ENCODE measurements at regions of chr2 and their contacts with region 1.

Region 1: GRCh38 chr2:210002158-210003157 is at the start of gene RPE:
- DNase-seq: peak; percentile 98
- ATAC-seq: peak; percentile 100
- total RNA-seq, gene RPE: 29.3 to 30.0 TPM

Region 2: DNA sequence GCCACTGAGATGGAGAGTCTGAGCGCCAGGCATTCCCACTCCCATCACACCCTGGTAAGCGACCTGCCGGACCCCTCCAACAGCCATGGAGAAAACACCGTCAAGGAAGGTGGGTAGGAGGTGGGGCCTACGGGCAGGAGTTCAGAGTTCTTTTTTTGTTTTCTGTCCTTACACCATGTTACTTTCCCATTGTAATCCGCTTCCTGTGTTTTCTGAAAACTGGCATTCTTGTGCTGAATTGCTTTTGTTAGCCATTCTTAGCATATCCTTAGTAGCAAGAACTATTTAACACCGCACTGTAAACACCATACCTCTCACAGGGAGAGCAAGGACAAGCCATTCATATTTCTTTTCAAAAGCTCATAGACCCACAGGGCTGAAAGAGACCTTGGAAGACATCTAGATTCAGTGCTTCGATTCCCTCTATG is 184.6 kb before region 1 on chr2:
- intact Hi-C with region 1: no loop called
- DNase-seq: no peak
- ATAC-seq: no peak

Region 3: GRCh38 chr2:210086292-210086691 is 83.8 kb after region 1 on chr2:
- intact Hi-C with region 1: no loop called
- DNase-seq: no peak
- ATAC-seq: no peak

Region 4: GRCh38 chr2:210112871-210113270 is 110.4 kb after region 1 on chr2:
- intact Hi-C with region 1: no loop called
- DNase-seq: no peak
- ATAC-seq: no peak

Region 5: DNA sequence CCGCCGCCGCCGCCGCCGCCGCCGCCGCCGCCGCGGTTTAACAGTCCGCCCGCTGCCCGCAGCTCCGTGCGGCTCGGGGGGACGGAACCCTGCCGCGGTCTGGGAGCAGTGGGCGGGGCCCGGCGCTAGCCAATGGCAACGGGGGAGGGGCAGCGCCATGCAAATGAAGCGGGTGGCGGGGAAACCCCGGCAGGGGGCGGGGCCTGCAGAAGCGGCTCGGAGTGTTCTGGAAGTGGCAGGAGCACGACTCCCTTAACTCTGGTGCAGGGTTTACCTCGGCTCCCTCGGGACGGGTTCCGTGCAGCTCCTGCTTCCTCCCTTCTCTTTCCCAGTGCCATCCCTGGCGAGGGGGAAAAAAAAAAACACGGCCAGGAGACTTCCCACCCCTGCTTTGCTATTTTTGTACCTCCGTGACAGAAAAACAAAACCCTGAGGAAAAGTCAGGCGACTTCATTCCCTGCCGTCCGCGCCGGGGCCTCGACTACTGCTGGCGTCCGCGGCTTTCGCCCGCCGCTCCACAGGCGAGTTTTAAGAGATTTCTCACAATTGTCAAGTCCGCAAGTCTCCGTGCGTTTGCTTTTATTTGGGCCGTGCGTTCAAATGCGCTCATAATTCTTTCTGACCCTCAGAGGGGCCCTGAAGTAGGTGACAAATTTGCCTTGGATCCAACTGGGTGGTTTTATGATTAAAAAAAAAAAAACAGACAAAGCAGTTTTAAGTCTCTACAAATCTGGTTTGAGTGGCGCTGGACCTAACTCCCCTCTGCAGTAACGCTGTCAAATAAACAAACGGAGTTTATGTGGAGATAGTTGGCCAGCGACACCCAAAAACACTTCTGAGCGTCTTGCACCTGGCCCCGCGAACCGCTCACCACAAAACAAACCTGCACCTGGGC is 169.1 kb after region 1 on chr2 and contains the start of gene KANSL1L:
- intact Hi-C with region 1: loop called in 1 of 2 experiments (anchors 5 kb)
- DNase-seq: peak; percentile 99
- ATAC-seq: peak; percentile 95 to 96
- total RNA-seq, gene KANSL1L: 15.5 to 17.1 TPM

Region 6: DNA sequence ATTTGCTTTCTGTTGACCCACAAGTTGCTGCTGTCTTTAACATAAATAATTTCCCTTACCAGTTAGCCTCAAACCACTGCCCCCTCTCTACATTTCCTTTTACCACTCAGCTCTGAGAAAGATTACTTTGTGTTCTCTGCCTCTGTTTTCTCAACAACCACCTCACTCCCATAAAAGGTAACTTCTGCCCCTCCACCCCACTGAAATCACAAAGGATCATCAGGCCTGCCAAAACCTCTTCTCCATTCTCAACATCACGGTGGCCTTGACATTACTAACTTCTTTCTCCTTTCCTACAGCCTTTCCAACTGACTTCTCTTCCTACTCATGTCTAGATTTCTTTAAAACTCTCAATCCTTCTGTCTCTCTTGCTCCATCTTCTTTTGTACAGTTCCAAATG is 212.7 kb after region 1 on chr2:
- intact Hi-C with region 1: no loop called
- DNase-seq: no peak
- ATAC-seq: no peak

Measured in left cardiac atrium (tissue), 4 donors.